Breast epithelium (tissue), 4 donors: ENCODE measurements at regions of chr13 and their contacts with region 1.

Region 1: DNA sequence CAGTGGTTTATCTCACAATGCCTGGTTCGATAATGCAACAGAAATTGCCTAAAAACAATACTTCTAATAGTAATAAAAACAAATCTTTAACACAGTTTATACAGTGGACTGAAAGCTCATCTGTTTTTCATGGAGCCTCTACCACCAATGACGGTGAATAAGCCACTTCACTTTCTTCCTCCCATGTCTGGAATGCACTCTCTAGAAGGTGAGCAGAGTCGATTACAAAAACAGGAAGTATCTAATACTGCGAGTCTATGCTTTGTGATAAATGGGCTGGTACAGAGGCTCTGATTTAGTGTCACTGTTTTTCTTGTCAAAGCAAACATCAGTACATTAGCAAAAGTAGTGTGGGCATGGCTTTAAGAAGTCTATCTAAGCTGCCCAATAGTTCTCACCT is 1348.6 kb upstream of the SLC10A2 start:
- DNase-seq: no peak
- H3K4me3 ChIP-seq: no peak overlapping the region
- H3K27ac ChIP-seq: no peak overlapping the region
- H3K4me1 ChIP-seq: no peaks in the 10 kb centered on the region
- H3K27me3 ChIP-seq: no peaks in the 10 kb centered on the region
- CTCF ChIP-seq: no peak
- POLR2A ChIP-seq: no peak

Region 2: DNA sequence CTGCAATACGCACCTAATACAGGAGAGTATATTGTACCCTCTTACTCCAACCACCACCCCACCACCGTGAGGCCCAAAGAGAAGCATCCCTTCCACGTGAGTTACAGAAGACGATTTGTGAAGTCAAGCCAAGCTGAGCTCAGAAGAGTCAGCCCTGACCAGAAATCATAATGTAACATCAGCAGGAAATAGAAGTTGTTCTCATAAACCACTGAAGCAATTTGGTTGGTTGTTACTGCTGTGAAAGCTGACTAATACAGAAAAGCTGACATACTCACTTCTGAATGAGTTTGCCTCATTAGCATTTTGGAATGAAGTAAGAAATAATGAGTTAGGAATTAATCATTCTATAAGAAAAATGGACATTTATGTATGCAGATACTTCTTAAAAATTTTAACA is 599.2 kb before region 1 on chr13:
- intact Hi-C with region 1: loop called (anchors 5 kb)
- DNase-seq: no peak
- H3K4me3 ChIP-seq: no peak overlapping the region
- H3K27ac ChIP-seq: no peak overlapping the region
- H3K4me1 ChIP-seq: no peaks in the 10 kb centered on the region
- H3K27me3 ChIP-seq: no peaks in the 10 kb centered on the region
- CTCF ChIP-seq: no peak
- POLR2A ChIP-seq: no peak

Region 3: DNA sequence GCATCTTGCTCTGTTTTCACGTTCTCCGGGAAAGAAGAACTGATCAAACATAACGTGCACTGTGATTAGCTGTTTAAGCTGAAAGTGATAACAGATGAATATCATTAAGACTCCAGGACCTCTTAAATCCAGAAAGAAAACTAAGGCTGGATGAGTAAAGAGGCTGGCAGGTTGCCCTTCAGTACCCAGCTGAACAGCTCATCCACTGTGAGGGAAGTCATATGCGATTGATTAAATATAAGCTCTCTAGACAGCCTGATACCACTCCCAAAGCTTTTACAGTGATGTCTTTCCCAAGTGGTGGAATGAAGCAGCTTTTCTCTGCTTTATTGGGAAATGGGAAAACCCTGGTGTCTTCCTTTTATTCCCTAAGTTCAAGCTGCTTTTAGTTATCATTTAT is 2003.8 kb after region 1 on chr13:
- intact Hi-C with region 1: no loop called
- DNase-seq: no peak
- H3K4me3 ChIP-seq: no peak overlapping the region
- H3K27ac ChIP-seq: no peak overlapping the region
- H3K4me1 ChIP-seq: no peaks in the 10 kb centered on the region
- H3K27me3 ChIP-seq: no peaks in the 10 kb centered on the region
- CTCF ChIP-seq: no peak
- POLR2A ChIP-seq: no peak